ENCODE measurements at regions of chr1 and their contacts with region 1.

Region 1: DNA sequence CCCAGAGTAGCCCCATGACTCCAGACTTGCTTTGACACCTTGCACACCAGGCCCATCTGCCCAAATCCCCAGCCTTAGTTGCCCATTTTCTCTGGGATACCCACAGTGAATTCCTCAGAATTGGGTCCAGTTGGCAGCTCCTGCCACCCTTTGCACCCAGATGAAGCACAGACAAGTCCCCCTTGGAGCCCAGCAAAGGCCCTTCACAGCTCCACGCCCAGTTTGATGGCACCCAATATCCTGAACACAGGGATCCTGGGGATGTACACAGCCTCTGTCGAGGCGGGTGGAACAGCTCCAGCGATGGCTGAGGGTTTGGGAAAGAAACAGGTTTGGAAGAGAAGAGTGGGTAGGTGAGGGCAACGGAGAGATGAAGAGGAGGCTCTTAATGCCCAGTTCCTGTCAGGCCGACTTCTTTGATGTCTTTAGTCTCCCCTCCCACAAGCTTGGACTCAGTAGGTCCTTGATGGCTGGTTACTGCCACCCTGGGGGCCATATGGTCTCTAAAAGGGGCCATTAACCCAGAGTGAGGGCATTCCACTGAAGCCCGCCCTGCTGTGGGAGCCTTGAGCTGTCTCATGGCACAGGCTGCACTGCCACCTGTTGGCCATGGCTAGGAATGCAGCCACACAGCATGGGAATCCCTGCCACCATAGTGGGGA is 21.7 kb downstream of the TMEM53 start:
- DNase-seq: peak; percentile 60 to 65
- ATAC-seq: peak; percentile 77 to 93
- H3K4me3 ChIP-seq: no peak overlapping the region
- H3K27ac ChIP-seq: no peak overlapping the region
- H3K4me1 ChIP-seq: no peaks in the 10 kb centered on the region
- CTCF ChIP-seq: peak; percentile 71
- EP300 ChIP-seq: no peak
- POLR2A ChIP-seq: no peak
- RAD21 ChIP-seq: peak; percentile 78 to 81

Region 2: DNA sequence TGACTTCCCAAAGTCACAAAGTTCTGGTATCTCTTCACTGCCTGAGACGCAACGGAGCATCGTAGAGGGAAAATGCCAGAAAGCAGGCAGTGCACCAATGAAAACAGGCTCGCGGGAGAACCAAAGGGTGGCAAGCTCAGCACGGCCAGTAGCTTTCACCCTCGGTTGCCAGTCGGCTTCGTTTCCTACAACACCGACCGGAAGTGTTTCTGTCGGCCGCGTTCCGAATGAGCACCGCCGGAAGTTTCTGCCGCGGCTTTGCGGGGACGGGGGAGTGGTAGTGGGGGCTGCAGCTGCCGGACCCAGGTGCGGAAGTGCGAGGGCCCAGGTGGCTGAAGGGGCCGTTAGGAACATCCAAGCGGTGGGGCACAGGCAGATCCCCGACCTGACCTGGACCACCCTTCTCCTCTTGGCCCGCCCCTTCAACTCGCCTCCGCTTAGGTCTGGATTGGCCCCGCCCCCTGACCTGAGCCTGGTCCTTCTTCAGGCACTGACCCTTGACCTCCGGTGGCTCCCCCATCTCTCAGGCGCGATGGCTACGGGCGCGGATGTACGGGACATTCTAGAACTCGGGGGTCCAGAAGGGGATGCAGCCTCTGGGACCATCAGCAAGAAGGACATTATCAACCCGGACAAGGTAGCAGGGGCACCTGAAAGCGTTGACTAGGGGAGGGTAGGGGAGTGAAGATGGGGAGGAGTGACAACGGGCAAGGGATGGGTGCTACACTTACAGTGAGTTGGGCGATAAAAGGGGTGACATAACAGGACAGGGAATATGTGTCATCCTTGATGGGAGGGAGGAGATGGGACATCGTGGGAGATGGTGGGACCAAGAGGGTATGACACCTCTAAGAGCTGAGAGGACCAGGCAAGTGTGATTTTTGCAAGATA is 439.1 kb before region 1 on chr1 and contains the start of gene DMAP1:
- CTCF ChIA-PET with region 1: interaction called, 35 read pairs
- POLR2A ChIA-PET with region 1: interaction called, 3 read pairs
- DNase-seq: peak; percentile 36 to 82
- ATAC-seq: peak; percentile 85 to 91
- H3K4me3 ChIP-seq: peak within 1 kb of the TSS; percentile 83
- H3K27ac ChIP-seq: peak within 1 kb of the TSS; percentile 91 to 95
- H3K4me1 ChIP-seq: peaks cover 13% of the 10 kb centered on the region; the same call in 1 of the 3 replicates
- CTCF ChIP-seq: no peak
- EP300 ChIP-seq: no peak
- POLR2A ChIP-seq: peak; percentile 14
- RAD21 ChIP-seq: peak; percentile 27 to 46; a peak in 3 of 5 replicates
- polyA plus RNA-seq, gene DMAP1: 28.2 and 28.7 TPM in 2 replicates

Region 3: DNA sequence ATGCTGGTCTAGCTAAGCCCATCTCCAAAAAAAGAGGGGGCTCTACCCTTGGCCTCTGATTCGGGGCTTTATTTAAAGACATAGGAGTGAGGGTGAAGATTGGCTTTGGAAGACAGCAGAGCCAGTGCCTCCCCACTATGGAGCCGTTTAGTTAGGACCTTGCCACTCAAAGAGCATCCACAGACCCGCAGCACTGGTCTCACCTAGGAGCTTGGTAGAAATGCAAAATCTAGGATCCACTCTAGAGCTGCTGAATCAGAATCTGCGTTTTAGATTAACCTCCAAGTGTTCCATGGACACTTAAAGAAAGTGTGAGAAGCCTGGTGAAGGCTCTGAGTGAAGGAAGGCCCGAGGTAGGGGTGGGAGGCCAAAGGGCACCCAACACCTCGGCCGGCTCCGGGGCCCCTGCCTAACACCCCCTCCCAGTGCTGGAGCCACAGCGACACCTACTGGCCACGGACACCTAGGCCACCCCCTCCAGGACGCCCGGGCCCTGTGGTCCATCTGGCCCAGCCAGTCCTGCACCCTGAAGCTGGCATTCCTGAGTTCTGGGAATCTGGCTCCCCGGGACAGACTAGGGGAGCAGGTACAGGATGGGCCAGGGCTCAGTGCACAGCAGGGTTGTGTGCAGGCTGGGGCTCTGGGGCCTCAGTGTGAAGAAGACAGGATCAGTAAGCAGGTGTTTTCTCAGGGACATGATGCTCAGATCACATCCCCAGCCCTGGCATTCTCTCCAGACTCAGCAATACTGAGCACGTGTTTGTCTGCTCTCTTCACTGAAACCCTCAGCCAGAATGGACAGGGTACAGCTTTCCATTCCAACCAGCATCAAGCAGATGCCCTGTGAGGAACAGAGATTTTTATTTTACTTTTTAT is 57.5 kb before region 1 on chr1:
- CTCF ChIA-PET with region 1: interaction called, 14 read pairs
- POLR2A ChIA-PET with region 1: no interaction called
- DNase-seq: peak; percentile 47 to 90
- ATAC-seq: peak; percentile 97 to 99
- H3K4me3 ChIP-seq: no peak overlapping the region
- H3K27ac ChIP-seq: no peak overlapping the region
- H3K4me1 ChIP-seq: no peaks in the 10 kb centered on the region
- CTCF ChIP-seq: peak; percentile 77
- EP300 ChIP-seq: no peak
- POLR2A ChIP-seq: no peak
- RAD21 ChIP-seq: peak; percentile 91 to 93

Region 4: DNA sequence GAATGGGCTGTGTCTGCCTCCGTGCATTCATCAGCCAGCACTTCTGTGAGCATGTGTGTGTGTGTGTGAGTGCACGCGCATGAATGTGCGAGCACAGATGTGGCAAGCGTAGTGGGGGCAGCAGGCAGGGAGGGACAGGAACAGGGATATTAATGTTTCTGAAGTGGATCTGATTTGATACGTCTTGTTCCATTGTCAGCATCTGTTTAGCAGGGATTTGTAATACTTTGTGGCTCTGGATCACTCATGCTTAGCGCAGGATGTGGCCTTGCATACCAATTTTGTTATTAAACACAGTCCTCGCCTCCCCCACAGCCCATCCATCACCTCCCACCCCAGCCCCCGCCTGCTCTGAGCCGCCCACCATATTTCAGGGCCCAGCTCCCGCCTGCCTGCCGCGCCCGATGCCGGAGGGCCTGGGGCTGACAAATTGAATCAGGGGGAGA is 30.7 kb before region 1 on chr1:
- CTCF ChIA-PET with region 1: interaction called, 11 read pairs
- POLR2A ChIA-PET with region 1: no interaction called
- DNase-seq: no peak
- ATAC-seq: no peak
- H3K4me3 ChIP-seq: no peak overlapping the region
- H3K27ac ChIP-seq: no peak overlapping the region
- H3K4me1 ChIP-seq: no peaks in the 10 kb centered on the region
- CTCF ChIP-seq: no peak
- EP300 ChIP-seq: no peak
- POLR2A ChIP-seq: no peak
- RAD21 ChIP-seq: no peak

Region 5: GRCh38 chr1:44664730-44665370 is 12.3 kb after region 1 on chr1:
- CTCF ChIA-PET with region 1: interaction called, 33 read pairs
- POLR2A ChIA-PET with region 1: no interaction called
- DNase-seq: no peak
- ATAC-seq: no peak
- H3K4me3 ChIP-seq: no peak overlapping the region
- H3K27ac ChIP-seq: no peak overlapping the region
- H3K4me1 ChIP-seq: no peaks in the 10 kb centered on the region
- CTCF ChIP-seq: no peak
- EP300 ChIP-seq: no peak
- POLR2A ChIP-seq: no peak
- RAD21 ChIP-seq: no peak

Region 6: GRCh38 chr1:44707959-44708831 is 55.6 kb after region 1 on chr1:
- CTCF ChIA-PET with region 1: interaction called, 12 read pairs
- POLR2A ChIA-PET with region 1: no interaction called
- DNase-seq: peak; percentile 40 to 63
- ATAC-seq: peak; percentile 67 to 76; a peak in 5 of 6 replicates
- H3K4me3 ChIP-seq: no peak overlapping the region
- H3K27ac ChIP-seq: peak overlapping the region; percentile 84 to 93
- H3K4me1 ChIP-seq: peaks cover 31% of the 10 kb centered on the region
- CTCF ChIP-seq: peak; percentile 49; the same call in 2 of the 3 replicates
- EP300 ChIP-seq: no peak
- POLR2A ChIP-seq: no peak
- RAD21 ChIP-seq: peak; percentile 43

Measured in A549 (cell line).